Right ventricle myocardium inferior (tissue), 1 donor: ENCODE measurements at regions of chr15 and their contacts with region 1.

Region 1: GRCh38 chr15:68704496-68705021 is 116.1 kb downstream of the ANP32A start:
- DNase-seq: no peak
- ATAC-seq: peak; percentile 78

Region 2: DNA sequence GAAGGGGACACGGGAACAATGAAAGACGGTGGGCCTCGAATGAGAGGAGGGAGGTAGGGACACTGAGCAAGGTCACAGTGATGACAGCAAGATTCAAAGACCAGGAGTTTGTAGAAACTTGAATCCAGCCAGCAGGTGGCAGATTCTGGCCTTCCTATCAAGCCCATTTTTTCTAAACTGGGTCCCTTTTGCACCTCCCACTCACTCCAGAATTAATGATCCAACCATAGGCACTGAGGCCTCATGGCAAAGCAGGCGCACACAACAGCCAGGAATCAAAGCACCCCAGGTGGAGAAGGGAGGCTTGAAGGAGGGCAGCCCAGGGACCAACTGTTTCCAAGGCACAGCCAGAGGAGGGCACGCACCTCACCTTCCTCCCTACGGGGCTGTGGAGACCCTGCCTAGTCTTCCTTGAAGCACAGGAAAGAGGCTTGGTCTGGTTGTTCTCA is 25.9 kb after region 1 on chr15:
- intact Hi-C with region 1: loop called (anchors 1 kb)
- DNase-seq: no peak
- ATAC-seq: peak; percentile 33

Region 3: GRCh38 chr15:68814596-68814995 is 110.0 kb after region 1 on chr15:
- intact Hi-C with region 1: no loop called
- DNase-seq: no peak
- ATAC-seq: no peak